Mammary epithelial cell (primary cell): ENCODE measurements at regions of chr4 and their contacts with region 1.

Region 1: DNA sequence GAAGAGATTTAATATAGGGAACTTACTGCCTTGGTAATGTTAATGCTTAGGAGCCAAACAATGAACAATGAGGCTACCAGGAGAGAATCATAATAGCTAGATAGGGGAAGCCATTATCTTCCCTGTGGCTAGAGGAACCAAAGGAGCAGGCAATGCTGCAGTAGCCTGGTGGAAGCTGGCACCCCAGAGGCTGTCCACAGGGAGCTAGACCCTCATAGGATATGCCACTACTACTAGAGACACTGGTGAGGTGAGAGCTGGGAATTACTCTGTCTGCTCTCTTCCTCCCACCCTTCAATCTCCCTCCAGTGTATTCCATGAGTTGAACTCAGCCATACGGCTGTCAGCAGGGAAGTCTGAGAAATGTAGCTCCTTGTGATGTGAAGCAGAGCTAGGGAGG is 601.4 kb downstream of the KCNIP4 start:
- DNase-seq: no peak
- H3K4me3 ChIP-seq: no peak overlapping the region
- H3K27ac ChIP-seq: no peak overlapping the region
- H3K4me1 ChIP-seq: no peaks in the 10 kb centered on the region
- H3K27me3 ChIP-seq: peaks cover 3% of the 10 kb centered on the region
- CTCF ChIP-seq: no peak

Region 2: GRCh38 chr4:21032089-21032645 is 315.0 kb before region 1 on chr4:
- CTCF ChIA-PET with region 1: no interaction called
- dilution Hi-C with region 1: loop called (anchors 10 kb)
- in situ Hi-C with region 1: no loop called
- intact Hi-C with region 1: no loop called
- DNase-seq: no peak
- H3K4me3 ChIP-seq: no peak overlapping the region
- H3K27ac ChIP-seq: no peak overlapping the region
- H3K4me1 ChIP-seq: no peaks in the 10 kb centered on the region
- H3K27me3 ChIP-seq: no peaks in the 10 kb centered on the region
- CTCF ChIP-seq: no peak